Activated T-helper 1 cell treated with anti-CD3 and anti-CD28 coated beads, Interleukin-12 subunit alpha, Interleukin-12 subunit beta, Interleukin-2, Interleukin-4 antibody, amounts not matched to agents 30 ng/mL and 10 ng/mL and 1 ng/mL, durations not matched to agents 14 hours and 24 hours and 36 hours (primary cell): ENCODE measurements at regions of chr19 and their contacts with region 1.

Region 1: GRCh38 chr19:40529093-40529954 is 47.3 kb upstream of the SHKBP1 start:
- DNase-seq: peak; percentile 89
- H3K4me3 Mint-ChIP-seq: peak overlapping the region; percentile 74
- H3K27ac Mint-ChIP-seq: peak overlapping the region; percentile 79
- H3K4me1 Mint-ChIP-seq: peaks cover 13% of the 10 kb centered on the region
- H3K27me3 Mint-ChIP-seq: peaks cover 35% of the 10 kb centered on the region

Region 2: GRCh38 chr19:40549007-40549708 is 19.8 kb after region 1 on chr19:
- intact Hi-C with region 1: loop called (anchors 1 kb)
- DNase-seq: peak; percentile 63
- H3K4me3 Mint-ChIP-seq: no peak overlapping the region
- H3K27ac Mint-ChIP-seq: no peak overlapping the region
- H3K4me1 Mint-ChIP-seq: peaks cover 4% of the 10 kb centered on the region
- H3K27me3 Mint-ChIP-seq: peaks cover 45% of the 10 kb centered on the region

Region 3: GRCh38 chr19:40576585-40577451 is 47.5 kb after region 1 on chr19 and contains the start of gene SHKBP1:
- intact Hi-C with region 1: loop called (anchors 1 kb)
- DNase-seq: peak; percentile 92
- H3K4me3 Mint-ChIP-seq: peak within 1 kb of the TSS; percentile 86
- H3K27ac Mint-ChIP-seq: peak within 1 kb of the TSS; percentile 71
- H3K4me1 Mint-ChIP-seq: peaks cover 17% of the 10 kb centered on the region
- H3K27me3 Mint-ChIP-seq: no peaks in the 10 kb centered on the region
- total RNA-seq, gene SHKBP1: 102 and 113 TPM in 2 replicates

Region 4: DNA sequence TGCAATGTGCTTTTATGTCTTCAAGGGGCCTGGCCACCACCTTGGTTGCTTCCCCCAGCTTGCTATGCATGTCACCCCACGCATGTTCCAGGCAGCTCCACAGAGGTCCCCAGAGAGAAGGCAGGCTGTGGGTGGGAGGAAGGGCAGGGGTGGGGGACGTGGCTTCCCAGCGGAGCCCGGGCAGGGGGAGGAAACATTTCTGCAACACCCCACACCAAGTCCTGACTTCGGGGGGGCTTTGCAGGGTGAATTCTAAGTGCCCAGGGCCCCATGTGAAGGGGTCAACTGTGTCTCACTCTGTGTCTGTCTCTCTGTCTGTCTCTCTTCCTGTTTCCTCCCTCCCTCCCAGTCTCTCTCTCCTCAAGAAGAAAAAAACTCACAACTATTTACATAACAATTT is 111.4 kb after region 1 on chr19:
- intact Hi-C with region 1: loop called (anchors 2 kb)
- DNase-seq: no peak
- H3K4me3 Mint-ChIP-seq: no peak overlapping the region
- H3K27ac Mint-ChIP-seq: no peak overlapping the region
- H3K4me1 Mint-ChIP-seq: peaks cover 2% of the 10 kb centered on the region
- H3K27me3 Mint-ChIP-seq: peaks cover under 1% of the 10 kb centered on the region